ENCODE measurements at regions of chr6 and their contacts with region 1.

Region 1: GRCh38 chr6:14210663-14211561 is 93.3 kb downstream of the CD83 start:
- DNase-seq: peak; percentile 67 to 97
- H3K4me3 ChIP-seq: peak overlapping the region; percentile 96
- H3K27ac ChIP-seq: peak overlapping the region; percentile 51
- H3K4me1 ChIP-seq: peaks cover 14% of the 10 kb centered on the region
- H3K27me3 ChIP-seq: no peaks in the 10 kb centered on the region
- CTCF ChIP-seq: no peak

Region 2: GRCh38 chr6:14371530-14371929 is 160.6 kb after region 1 on chr6:
- CTCF ChIA-PET with region 1: no interaction called
- POLR2A ChIA-PET with region 1: no interaction called
- intact Hi-C with region 1: loop called (anchors 10 kb)
- DNase-seq: no peak
- H3K4me3 ChIP-seq: no peak overlapping the region
- H3K27ac ChIP-seq: no peak overlapping the region
- H3K4me1 ChIP-seq: no peaks in the 10 kb centered on the region
- H3K27me3 ChIP-seq: no peaks in the 10 kb centered on the region
- CTCF ChIP-seq: no peak

Region 3: DNA sequence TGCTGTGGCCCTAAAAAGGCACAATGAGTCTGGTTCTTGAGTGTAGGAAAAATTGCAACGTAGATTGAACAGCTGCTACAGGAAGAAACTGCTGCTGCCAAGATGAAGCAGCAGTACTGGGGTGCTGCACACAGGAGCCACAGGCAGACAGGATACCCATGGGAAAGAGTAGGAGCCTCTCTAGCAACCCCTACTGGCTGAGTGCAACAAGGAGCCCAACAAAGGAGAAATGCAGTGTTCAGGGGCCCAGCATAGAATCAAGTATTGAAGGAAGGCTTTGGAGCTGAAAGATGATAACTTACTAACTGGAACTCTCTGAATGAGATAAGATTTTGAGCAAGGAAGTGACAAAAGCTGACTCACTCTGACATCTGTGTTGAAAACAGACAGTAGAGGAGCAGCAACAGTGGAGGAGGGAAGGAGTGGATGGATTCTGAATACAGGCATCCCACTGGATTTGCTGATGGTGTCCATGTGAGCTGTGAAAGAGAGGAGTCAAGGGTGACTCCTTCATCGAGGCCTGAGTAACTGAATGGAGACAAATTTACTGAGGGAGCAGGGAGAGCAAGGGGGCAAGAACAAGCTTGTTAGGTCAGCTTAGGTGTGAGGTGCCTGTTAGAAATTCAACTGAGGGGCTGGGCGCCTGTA is 500.3 kb after region 1 on chr6:
- CTCF ChIA-PET with region 1: interaction called, 3 read pairs
- POLR2A ChIA-PET with region 1: no interaction called
- intact Hi-C with region 1: loop called (anchors 1 kb)
- DNase-seq: peak; percentile 72 to 82
- H3K4me3 ChIP-seq: no peak overlapping the region
- H3K27ac ChIP-seq: peak overlapping the region; percentile 91
- H3K4me1 ChIP-seq: peaks cover 50% of the 10 kb centered on the region
- H3K27me3 ChIP-seq: no peaks in the 10 kb centered on the region
- CTCF ChIP-seq: peak; percentile 66

Region 4: GRCh38 chr6:14743465-14744211 is 532.7 kb after region 1 on chr6:
- CTCF ChIA-PET with region 1: no interaction called
- POLR2A ChIA-PET with region 1: no interaction called
- intact Hi-C with region 1: loop called (anchors 1 kb)
- DNase-seq: peak; percentile 94 to 96
- H3K4me3 ChIP-seq: peak overlapping the region; percentile 32; the same call in 1 of the 2 replicates
- H3K27ac ChIP-seq: peak overlapping the region; percentile 100
- H3K4me1 ChIP-seq: peaks cover 37% of the 10 kb centered on the region
- H3K27me3 ChIP-seq: no peaks in the 10 kb centered on the region
- CTCF ChIP-seq: no peak

Region 5: GRCh38 chr6:15491255-15491985 is 1280.5 kb after region 1 on chr6:
- CTCF ChIA-PET with region 1: no interaction called
- POLR2A ChIA-PET with region 1: no interaction called
- intact Hi-C with region 1: loop called (anchors 1 kb)
- DNase-seq: peak in 1 of 2 experiments; percentile 61
- H3K4me3 ChIP-seq: no peak overlapping the region
- H3K27ac ChIP-seq: no peak overlapping the region
- H3K4me1 ChIP-seq: no peaks in the 10 kb centered on the region
- H3K27me3 ChIP-seq: no peaks in the 10 kb centered on the region
- CTCF ChIP-seq: peak; percentile 91